ENCODE measurements at regions of chr1 and their contacts with region 1.

Region 1: GRCh38 chr1:66331657-66332547 is 202.1 kb upstream of the SGIP1 start:
- DNase-seq: peak in 8 of 9 experiments; percentile 18 to 74 (median 54)
- ATAC-seq: peak; percentile 12
- H3K4me3 ChIP-seq: peak overlapping the region; percentile 73 to 79
- H3K4me3 Mint-ChIP-seq: peak overlapping the region; percentile 99
- H3K27ac ChIP-seq: peak overlapping the region; percentile 86
- H3K27ac Mint-ChIP-seq: peak overlapping the region; percentile 98
- H3K4me1 ChIP-seq: peaks cover 42% of the 10 kb centered on the region
- H3K4me1 Mint-ChIP-seq: peaks cover 70% of the 10 kb centered on the region
- H3K27me3 ChIP-seq: no peaks in the 10 kb centered on the region
- H3K27me3 Mint-ChIP-seq: no peaks in the 10 kb centered on the region
- CTCF ChIP-seq: no peak

Region 2: GRCh38 chr1:65554829-65555228 is 777.1 kb before region 1 on chr1:
- CTCF ChIA-PET with region 1: no interaction called
- POLR2A ChIA-PET with region 1: no interaction called
- intact Hi-C with region 1: no loop called
- DNase-seq: no peak
- ATAC-seq: no peak
- H3K4me3 ChIP-seq: no peak overlapping the region
- H3K4me3 Mint-ChIP-seq: no peak overlapping the region
- H3K27ac ChIP-seq: no peak overlapping the region
- H3K27ac Mint-ChIP-seq: no peak overlapping the region
- H3K4me1 ChIP-seq: no peaks in the 10 kb centered on the region
- H3K4me1 Mint-ChIP-seq: no peaks in the 10 kb centered on the region
- H3K27me3 ChIP-seq: no peaks in the 10 kb centered on the region
- H3K27me3 Mint-ChIP-seq: no peaks in the 10 kb centered on the region
- CTCF ChIP-seq: no peak

Region 3: GRCh38 chr1:66276218-66276617 is 55.7 kb before region 1 on chr1:
- CTCF ChIA-PET with region 1: interaction called, 9 read pairs
- POLR2A ChIA-PET with region 1: interaction called, 8 read pairs
- intact Hi-C with region 1: loop called in 1 of 2 experiments (anchors 2 kb)
- DNase-seq: peak in 3 of 9 experiments; percentile 22 to 73 (median 55)
- ATAC-seq: peak; percentile 51
- H3K4me3 ChIP-seq: peak overlapping the region; percentile 4 to 10
- H3K4me3 Mint-ChIP-seq: peak overlapping the region; percentile 71
- H3K27ac ChIP-seq: peak overlapping the region; percentile 6 to 51
- H3K27ac Mint-ChIP-seq: peak overlapping the region; percentile 87
- H3K4me1 ChIP-seq: peaks cover 56% of the 10 kb centered on the region
- H3K4me1 Mint-ChIP-seq: peaks cover 91% of the 10 kb centered on the region
- H3K27me3 ChIP-seq: no peaks in the 10 kb centered on the region
- H3K27me3 Mint-ChIP-seq: no peaks in the 10 kb centered on the region
- CTCF ChIP-seq: no peak

Region 4: DNA sequence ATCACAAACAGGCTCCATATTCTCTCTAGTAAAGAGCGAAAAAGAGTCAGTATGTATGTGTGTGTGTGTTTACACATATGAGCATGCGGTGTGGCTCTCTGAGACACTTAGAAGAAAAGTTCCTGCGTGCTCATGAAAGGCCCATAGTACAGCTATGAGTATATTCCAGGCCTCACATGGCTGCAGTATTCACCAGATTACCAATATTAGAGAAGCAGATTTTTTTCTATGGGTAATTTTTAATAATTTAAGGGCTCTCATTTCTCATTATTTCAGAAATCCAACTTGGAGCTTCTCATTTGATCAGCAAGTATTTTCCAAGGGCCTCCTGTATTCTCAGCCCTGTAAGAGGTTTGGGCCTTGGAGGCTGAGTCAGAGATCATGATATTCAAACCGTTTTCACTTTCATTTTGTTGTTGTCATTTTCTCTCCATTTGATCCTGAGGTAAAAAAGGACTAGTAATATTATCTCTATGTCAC is 30.9 kb before region 1 on chr1:
- CTCF ChIA-PET with region 1: no interaction called
- POLR2A ChIA-PET with region 1: interaction called, 16 read pairs
- intact Hi-C with region 1: loop called (anchors 1 to 2 kb)
- DNase-seq: peak in 3 of 9 experiments; percentile 24 to 76 (median 60)
- ATAC-seq: peak; percentile 86
- H3K4me3 ChIP-seq: peak overlapping the region in 1 of 2 experiments; percentile 20
- H3K4me3 Mint-ChIP-seq: peak overlapping the region; percentile 79
- H3K27ac ChIP-seq: peak overlapping the region in 1 of 2 experiments; percentile 59
- H3K27ac Mint-ChIP-seq: peak overlapping the region; percentile 85
- H3K4me1 ChIP-seq: peaks cover 28% of the 10 kb centered on the region
- H3K4me1 Mint-ChIP-seq: peaks cover 31% of the 10 kb centered on the region
- H3K27me3 ChIP-seq: no peaks in the 10 kb centered on the region
- H3K27me3 Mint-ChIP-seq: no peaks in the 10 kb centered on the region
- CTCF ChIP-seq: no peak

Region 5: DNA sequence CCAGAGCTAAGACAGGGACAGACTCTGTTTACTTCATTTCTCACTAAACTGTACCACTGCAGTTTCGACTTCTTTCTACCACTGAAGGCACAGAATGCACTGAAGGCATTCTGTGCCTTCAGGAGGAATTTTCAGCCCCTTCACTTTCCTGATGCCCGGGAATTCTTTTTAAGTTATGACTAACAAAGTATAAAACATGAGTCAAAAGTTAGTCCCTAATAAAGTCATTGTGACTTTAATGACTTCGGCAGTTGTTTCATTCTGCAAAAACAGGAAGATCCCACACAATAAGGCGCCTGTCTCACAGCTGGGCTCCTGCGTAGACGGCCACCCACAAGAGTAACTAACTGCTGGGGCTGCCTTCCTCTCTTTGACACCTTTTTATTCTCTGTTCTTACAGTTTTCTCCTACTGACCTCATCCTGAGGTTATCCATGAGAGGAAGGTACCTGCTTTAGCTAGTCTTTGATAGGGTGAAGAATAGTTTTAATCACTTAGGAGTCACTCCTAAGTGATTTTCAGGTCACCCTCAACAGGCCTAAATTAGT is 18.2 kb after region 1 on chr1:
- CTCF ChIA-PET with region 1: interaction called, 28 read pairs
- POLR2A ChIA-PET with region 1: interaction called, 38 read pairs
- intact Hi-C with region 1: loop called (anchors 1 to 2 kb)
- DNase-seq: peak in 7 of 9 experiments; percentile 30 to 90 (median 68)
- ATAC-seq: peak; percentile 80
- H3K4me3 ChIP-seq: peak overlapping the region in 1 of 2 experiments; percentile 16
- H3K4me3 Mint-ChIP-seq: peak overlapping the region; percentile 72
- H3K27ac ChIP-seq: peak overlapping the region; percentile 33 to 68
- H3K27ac Mint-ChIP-seq: peak overlapping the region; percentile 95
- H3K4me1 ChIP-seq: peaks cover 81% of the 10 kb centered on the region
- H3K4me1 Mint-ChIP-seq: peaks cover 96% of the 10 kb centered on the region
- H3K27me3 ChIP-seq: no peaks in the 10 kb centered on the region
- H3K27me3 Mint-ChIP-seq: no peaks in the 10 kb centered on the region
- CTCF ChIP-seq: no peak

Region 6: DNA sequence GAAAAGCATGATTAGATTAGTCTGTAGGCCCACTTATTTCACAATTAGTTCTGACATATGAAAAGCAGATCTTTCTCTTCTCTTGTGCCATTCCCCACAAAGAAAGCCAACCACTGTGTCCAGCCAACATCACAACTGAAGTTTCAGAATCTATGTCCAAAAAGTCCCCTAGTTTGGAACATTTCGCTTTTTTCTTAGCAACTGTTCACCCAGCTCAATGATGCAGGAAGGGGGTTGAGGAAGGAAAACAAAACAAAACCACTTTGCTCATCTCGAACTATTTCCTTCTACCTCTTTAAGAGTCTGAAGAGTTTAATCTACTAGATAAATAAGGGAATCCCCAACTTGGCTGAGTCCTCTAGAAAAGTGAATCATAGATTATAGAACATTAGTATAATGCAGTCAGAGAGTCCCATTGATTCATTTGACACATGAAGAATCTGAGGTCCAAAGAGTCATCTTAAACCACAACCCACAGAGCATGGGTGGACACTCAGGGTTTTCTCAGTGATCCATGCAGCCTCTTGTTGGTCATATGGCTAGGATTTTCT is 42.7 kb after region 1 on chr1:
- CTCF ChIA-PET with region 1: interaction called, 3 read pairs
- POLR2A ChIA-PET with region 1: interaction called, 7 read pairs
- intact Hi-C with region 1: loop called (anchors 1 to 5 kb)
- DNase-seq: peak in 3 of 9 experiments; percentile 22 to 77 (median 61)
- ATAC-seq: peak; percentile 69
- H3K4me3 ChIP-seq: no peak overlapping the region
- H3K4me3 Mint-ChIP-seq: peak overlapping the region; percentile 63
- H3K27ac ChIP-seq: peak overlapping the region; percentile 19 to 75
- H3K27ac Mint-ChIP-seq: peak overlapping the region; percentile 94
- H3K4me1 ChIP-seq: peaks cover 48% of the 10 kb centered on the region
- H3K4me1 Mint-ChIP-seq: peaks cover 64% of the 10 kb centered on the region
- H3K27me3 ChIP-seq: peaks cover 0 to under 1% of the 10 kb centered on the region in 2 experiments
- H3K27me3 Mint-ChIP-seq: no peaks in the 10 kb centered on the region
- CTCF ChIP-seq: no peak

Region 7: DNA sequence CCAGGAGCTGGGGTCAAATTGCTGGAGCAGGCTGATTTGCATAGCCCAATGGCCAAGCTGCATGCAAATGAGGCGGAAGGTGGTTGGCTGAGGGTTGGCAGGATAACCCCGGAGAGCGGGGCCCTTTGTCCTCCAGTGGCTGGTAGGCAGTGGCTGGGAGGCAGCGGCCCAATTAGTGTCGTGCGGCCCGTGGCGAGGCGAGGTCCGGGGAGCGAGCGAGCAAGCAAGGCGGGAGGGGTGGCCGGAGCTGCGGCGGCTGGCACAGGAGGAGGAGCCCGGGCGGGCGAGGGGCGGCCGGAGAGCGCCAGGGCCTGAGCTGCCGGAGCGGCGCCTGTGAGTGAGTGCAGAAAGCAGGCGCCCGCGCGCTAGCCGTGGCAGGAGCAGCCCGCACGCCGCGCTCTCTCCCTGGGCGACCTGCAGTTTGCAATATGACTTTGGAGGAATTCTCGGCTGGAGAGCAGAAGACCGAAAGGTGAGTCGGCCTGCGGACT is 1353.2 kb after region 1 on chr1 and contains the start of gene GADD45A:
- CTCF ChIA-PET with region 1: no interaction called
- POLR2A ChIA-PET with region 1: no interaction called
- intact Hi-C with region 1: loop called in 1 of 2 experiments (anchors 10 kb)
- DNase-seq: peak; percentile 85 to 98 (median 93)
- ATAC-seq: peak; percentile 85
- H3K4me3 ChIP-seq: peak within 1 kb of the TSS; percentile 79 to 88
- H3K4me3 Mint-ChIP-seq: peak within 1 kb of the TSS; percentile 100
- H3K27ac ChIP-seq: peak within 1 kb of the TSS; percentile 61 to 66
- H3K27ac Mint-ChIP-seq: peak within 1 kb of the TSS; percentile 96
- H3K4me1 ChIP-seq: peaks cover 16% of the 10 kb centered on the region
- H3K4me1 Mint-ChIP-seq: peaks cover 25% of the 10 kb centered on the region
- H3K27me3 ChIP-seq: no peaks in the 10 kb centered on the region
- H3K27me3 Mint-ChIP-seq: no peaks in the 10 kb centered on the region
- CTCF ChIP-seq: no peak
- total RNA-seq, gene GADD45A: 194 to 196 TPM